ENCODE measurements at regions of chr22 and their contacts with region 1.

Region 1: GRCh38 chr22:22687638-22688500 is 43.5 kb downstream of the GGTLC2 start:
- DNase-seq: no peak
- H3K4me3 ChIP-seq: no peak overlapping the region
- H3K27me3 ChIP-seq: no peaks in the 10 kb centered on the region
- CTCF ChIP-seq: peak; percentile 86

Region 2: DNA sequence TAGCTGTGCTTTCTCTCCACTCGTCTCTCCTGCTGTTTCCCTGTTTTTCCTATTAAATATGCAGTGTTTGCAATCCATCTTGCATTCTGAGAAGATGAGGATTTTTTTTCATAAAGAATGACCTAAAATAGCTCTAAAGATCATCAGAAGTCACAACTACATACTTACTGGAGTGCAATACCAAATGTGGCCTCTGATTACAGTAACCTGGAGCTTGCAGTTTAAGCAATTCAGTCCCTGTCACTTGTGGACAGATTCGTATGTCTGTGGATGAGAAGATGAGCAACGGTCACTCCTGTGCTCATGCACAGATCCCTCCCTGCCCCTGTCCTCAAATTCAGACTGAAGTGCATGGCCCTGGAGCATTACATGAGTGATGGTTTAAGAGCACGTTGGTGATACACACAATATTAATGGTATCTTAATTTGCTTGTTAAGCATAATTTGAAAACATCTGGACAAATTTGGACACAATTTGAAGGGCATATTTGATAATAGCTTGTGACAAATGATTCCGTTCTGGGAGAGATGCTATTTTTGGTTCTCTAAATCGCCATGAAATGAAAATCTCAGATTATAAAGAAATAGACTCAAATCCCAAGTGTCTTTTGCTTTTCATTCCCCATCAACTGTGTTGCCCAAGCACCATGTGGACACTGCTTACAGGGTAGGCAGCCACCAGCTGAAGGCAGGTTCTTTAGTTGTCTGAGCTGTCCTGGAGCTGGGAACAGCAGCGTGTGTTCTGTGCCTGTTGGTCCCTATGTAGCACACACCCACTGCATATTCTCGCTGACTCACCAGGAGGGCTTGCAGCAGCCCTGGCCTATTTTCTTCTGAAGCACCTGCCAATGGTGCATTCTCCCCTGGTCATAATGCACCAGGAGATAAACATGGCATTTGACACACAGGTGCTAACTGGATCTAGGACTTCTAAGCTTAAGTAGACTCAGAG is 96.2 kb before region 1 on chr22:
- CTCF ChIA-PET with region 1: interaction called, 11 read pairs
- POLR2A ChIA-PET with region 1: no interaction called
- DNase-seq: no peak
- H3K4me3 ChIP-seq: no peak overlapping the region
- H3K27me3 ChIP-seq: no peaks in the 10 kb centered on the region; the same call in 1 of the 2 replicates
- CTCF ChIP-seq: no peak

Region 3: GRCh38 chr22:22666307-22667091 is 21.4 kb before region 1 on chr22:
- CTCF ChIA-PET with region 1: interaction called, 39 read pairs
- POLR2A ChIA-PET with region 1: no interaction called
- DNase-seq: no peak
- H3K4me3 ChIP-seq: no peak overlapping the region
- H3K27me3 ChIP-seq: no peaks in the 10 kb centered on the region; the same call in 1 of the 2 replicates
- CTCF ChIP-seq: peak; percentile 72

Region 4: GRCh38 chr22:22730655-22731373 is 42.9 kb after region 1 on chr22:
- CTCF ChIA-PET with region 1: no interaction called
- POLR2A ChIA-PET with region 1: no interaction called
- DNase-seq: no peak
- H3K4me3 ChIP-seq: no peak overlapping the region
- H3K27me3 ChIP-seq: peaks cover 2% of the 10 kb centered on the region
- CTCF ChIP-seq: no peak